ENCODE measurements at regions of chr11 and their contacts with region 1.

Region 1: DNA sequence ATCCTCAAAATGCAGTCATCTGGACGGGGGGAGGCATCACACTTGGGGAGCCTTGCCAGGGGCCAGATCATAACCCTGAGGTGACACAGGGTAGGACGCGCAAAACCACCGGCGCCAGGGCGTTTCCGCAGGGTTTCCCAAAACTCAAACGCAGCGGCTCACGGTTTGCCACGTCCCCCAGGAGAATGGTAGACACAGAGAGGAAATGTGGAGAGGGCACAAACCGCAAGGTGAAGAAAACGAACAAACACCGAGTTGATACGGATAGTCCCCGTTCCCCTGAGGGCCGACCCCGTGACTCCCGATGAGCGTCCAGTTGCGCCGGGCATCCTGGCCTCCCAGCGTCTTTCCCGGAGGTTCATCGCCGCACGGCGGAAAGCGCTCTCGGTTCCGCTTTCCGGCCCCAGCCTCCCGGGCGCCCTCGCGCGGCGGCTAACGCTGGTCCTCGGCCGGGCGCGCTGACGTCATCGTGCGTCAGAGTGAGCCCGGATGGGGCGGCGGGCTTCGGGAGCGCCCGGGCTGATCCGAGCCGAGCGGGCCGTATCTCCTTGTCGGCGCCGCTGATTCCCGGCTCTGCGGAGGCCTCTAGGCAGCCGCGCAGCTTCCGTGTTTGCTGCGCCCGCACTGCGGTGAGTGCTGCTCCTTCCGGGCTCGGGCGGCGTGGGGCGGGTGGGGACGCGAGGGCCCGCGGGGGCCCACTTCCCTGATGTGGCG is at the start of gene BIRC2:
- DNase-seq: peak; percentile 93 to 98 (median 95)
- ATAC-seq: peak; percentile 91
- H3K4me3 ChIP-seq: peak within 1 kb of the TSS; percentile 96
- H3K4me3 Mint-ChIP-seq: peak within 1 kb of the TSS; percentile 81 to 98 (median 96)
- H3K27ac ChIP-seq: peak within 1 kb of the TSS; percentile 99
- H3K27ac Mint-ChIP-seq: peak within 1 kb of the TSS; percentile 97 to 100 (median 99)
- H3K4me1 ChIP-seq: peaks cover 17% of the 10 kb centered on the region in 2 donors
- H3K4me1 Mint-ChIP-seq: peaks cover 29 to 48% (median 44%) of the 10 kb centered on the region in 7 donors
- H3K27me3 ChIP-seq: no peaks in the 10 kb centered on the region
- H3K27me3 Mint-ChIP-seq: no peaks in the 10 kb centered on the region
- total RNA-seq, gene BIRC2: 37.5 to 103 (median 72.0) TPM

Region 2: DNA sequence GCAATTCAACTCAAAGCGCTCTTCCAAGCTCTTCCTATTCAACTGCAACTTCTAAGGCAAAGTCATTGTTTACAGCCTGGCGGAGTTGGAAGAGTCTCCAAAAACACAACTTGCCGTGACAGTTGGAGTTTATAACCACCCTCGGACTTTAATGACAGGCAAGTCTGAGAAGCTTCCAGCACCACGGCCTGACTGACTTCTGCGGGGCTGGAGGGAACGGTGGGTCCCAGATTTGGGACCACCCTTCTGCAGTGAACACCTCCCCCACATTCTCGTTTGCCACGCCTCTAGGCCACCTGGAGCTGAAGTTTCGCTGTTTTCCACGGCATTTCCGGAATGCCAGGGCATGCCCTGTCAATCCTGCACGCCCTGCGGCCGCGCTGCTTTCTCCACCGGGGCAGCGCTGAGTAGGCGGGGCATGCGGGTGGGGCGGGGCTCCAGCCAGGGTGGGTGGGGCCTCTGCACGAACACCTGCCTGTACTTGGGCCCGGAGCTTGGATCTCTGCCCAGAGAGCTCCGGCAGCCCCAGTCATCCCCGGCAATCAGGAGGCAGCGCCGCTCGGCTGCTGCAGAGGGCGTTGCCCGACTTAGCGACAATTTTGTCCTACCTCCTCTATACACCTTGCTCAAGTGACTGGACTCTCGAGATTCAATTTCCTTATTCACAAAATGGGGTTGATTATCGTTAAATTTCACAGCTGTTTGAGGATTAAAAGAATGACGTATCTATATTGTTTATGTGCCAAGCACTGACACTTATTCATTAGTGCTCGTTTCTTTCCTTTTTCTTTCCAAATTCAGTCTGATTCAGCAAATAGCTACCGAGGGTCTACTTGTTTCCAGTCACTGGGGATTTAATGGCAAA is 78.3 kb before region 1 on chr11:
- CTCF ChIA-PET with region 1: no interaction called
- POLR2A ChIA-PET with region 1: interaction called, 4 read pairs
- intact Hi-C with region 1: loop called in 1 of 2 experiments (anchors 1 kb)
- DNase-seq: peak; percentile 55 to 85 (median 80)
- ATAC-seq: peak; percentile 99
- H3K4me3 ChIP-seq: peak overlapping the region; percentile 59
- H3K4me3 Mint-ChIP-seq: peak overlapping the region; percentile 77 to 97 (median 82)
- H3K27ac ChIP-seq: no peak overlapping the region
- H3K27ac Mint-ChIP-seq: peak overlapping the region; percentile 6 to 88 (median 75)
- H3K4me1 ChIP-seq: peaks cover 10 to 17% of the 10 kb centered on the region in 2 donors
- H3K4me1 Mint-ChIP-seq: peaks cover 14 to 47% (median 38%) of the 10 kb centered on the region in 7 donors
- H3K27me3 ChIP-seq: no peaks in the 10 kb centered on the region
- H3K27me3 Mint-ChIP-seq: peaks cover 0 to 49% (median 6%) of the 10 kb centered on the region in 5 donors

Region 3: GRCh38 chr11:102306048-102306585 is 40.8 kb before region 1 on chr11:
- CTCF ChIA-PET with region 1: interaction called, 4 read pairs
- POLR2A ChIA-PET with region 1: interaction called, 11 read pairs
- intact Hi-C with region 1: loop called in 1 of 2 experiments (anchors 5 kb)
- DNase-seq: peak in 1 of 9 donors; percentile 30
- ATAC-seq: peak; percentile 23
- H3K4me3 ChIP-seq: peak overlapping the region; percentile 14
- H3K4me3 Mint-ChIP-seq: peak overlapping the region; percentile 46 to 84 (median 64)
- H3K27ac ChIP-seq: peak overlapping the region; percentile 68
- H3K27ac Mint-ChIP-seq: peak overlapping the region; percentile 87 to 96 (median 93)
- H3K4me1 ChIP-seq: peaks cover 49 to 76% of the 10 kb centered on the region in 2 donors
- H3K4me1 Mint-ChIP-seq: peaks cover 41 to 80% (median 67%) of the 10 kb centered on the region in 7 donors
- H3K27me3 ChIP-seq: no peaks in the 10 kb centered on the region
- H3K27me3 Mint-ChIP-seq: no peaks in the 10 kb centered on the region

Region 4: DNA sequence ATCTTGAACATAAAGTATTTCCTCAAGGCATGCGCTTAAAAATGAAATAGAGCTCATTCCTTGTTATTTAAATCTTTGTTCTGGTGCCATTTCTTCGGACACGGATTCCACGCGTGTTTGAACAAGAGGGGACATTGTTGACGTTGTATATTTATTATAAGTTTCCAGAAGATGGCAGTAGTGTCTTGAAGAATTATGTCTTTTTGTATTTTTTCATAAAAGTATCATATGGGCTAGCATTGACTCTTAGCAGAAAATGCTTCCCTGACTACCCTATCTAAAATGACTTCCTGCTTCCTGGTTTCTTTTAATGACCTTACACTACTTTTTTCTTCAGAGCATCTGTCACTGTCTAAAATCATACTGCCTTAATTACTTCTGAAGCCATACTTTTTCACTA is 20.5 kb after region 1 on chr11:
- CTCF ChIA-PET with region 1: interaction called, 10 read pairs
- POLR2A ChIA-PET with region 1: interaction called, 8 read pairs
- intact Hi-C with region 1: no loop called
- DNase-seq: peak in 6 of 9 donors; percentile 33 to 65 (median 56)
- ATAC-seq: peak; percentile 77
- H3K4me3 ChIP-seq: no peak overlapping the region
- H3K4me3 Mint-ChIP-seq: peak overlapping the region in 3 of 10 donors; percentile 4 to 28 (median 19)
- H3K27ac ChIP-seq: no peak overlapping the region
- H3K27ac Mint-ChIP-seq: peak overlapping the region; percentile 16 to 93 (median 83)
- H3K4me1 ChIP-seq: peaks cover 0 to 12% of the 10 kb centered on the region in 2 donors
- H3K4me1 Mint-ChIP-seq: peaks cover 9 to 48% (median 33%) of the 10 kb centered on the region in 7 donors
- H3K27me3 ChIP-seq: no peaks in the 10 kb centered on the region
- H3K27me3 Mint-ChIP-seq: no peaks in the 10 kb centered on the region

Region 5: DNA sequence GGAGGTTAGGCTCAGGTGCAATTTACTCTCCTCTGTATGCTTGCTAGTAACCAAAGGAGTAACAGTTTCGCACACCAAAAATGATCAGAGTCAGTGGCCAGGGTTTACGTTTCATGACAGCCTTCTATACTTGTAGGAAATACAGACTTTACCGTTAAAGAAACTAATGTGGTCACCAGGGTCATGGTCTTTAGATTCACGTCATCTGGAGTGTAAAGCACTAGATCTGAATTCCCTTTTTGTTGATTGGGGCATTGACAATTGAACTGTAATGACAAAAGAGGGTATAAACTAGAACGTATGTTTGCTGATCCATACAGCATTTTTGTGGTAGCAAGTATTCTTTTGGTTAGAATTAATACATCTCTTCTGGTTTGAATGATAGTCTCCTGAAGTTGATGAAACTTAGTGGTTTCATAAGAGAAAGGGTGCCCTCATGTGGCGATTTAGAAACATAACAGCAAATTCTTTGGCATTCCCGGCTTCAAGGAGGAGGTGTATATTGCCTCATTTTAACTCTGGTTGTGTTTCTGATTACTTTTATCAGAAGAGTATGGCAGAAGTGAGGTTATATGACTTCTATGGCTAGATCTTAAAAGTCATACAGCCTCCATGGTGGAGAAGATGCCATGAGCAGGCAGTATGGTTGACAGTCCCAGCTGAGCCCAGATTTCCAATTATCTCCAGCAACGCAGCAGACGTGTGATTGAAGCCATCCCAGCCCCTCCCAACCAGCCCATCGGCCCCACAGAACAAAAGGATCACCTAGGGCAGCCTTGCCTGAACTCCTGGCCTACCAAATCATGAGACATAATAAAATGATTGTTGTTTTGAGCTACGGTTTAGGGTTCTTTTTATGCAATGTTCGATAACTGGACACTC is 148.5 kb after region 1 on chr11:
- CTCF ChIA-PET with region 1: interaction called, 18 read pairs
- POLR2A ChIA-PET with region 1: no interaction called
- intact Hi-C with region 1: loop called in 1 of 2 experiments (anchors 1 kb)
- DNase-seq: peak in 7 of 9 donors; percentile 54 to 79 (median 71)
- ATAC-seq: peak; percentile 91
- H3K4me3 ChIP-seq: no peak overlapping the region
- H3K4me3 Mint-ChIP-seq: peak overlapping the region in 1 of 10 donors; percentile 18
- H3K27ac ChIP-seq: no peak overlapping the region
- H3K27ac Mint-ChIP-seq: peak overlapping the region in 4 of 9 donors; percentile 2 to 40 (median 12)
- H3K4me1 ChIP-seq: no peaks in the 10 kb centered on the region
- H3K4me1 Mint-ChIP-seq: peaks cover 4 to 26% (median 10%) of the 10 kb centered on the region in 7 donors
- H3K27me3 ChIP-seq: no peaks in the 10 kb centered on the region
- H3K27me3 Mint-ChIP-seq: peaks cover 0 to 22% (median 0%) of the 10 kb centered on the region in 5 donors

Measured in naive thymus-derived CD4-positive, alpha-beta T cell (primary cell).